Motor neuron (in vitro differentiated cells): ENCODE measurements at regions of chr6 and their contacts with region 1.

Region 1: DNA sequence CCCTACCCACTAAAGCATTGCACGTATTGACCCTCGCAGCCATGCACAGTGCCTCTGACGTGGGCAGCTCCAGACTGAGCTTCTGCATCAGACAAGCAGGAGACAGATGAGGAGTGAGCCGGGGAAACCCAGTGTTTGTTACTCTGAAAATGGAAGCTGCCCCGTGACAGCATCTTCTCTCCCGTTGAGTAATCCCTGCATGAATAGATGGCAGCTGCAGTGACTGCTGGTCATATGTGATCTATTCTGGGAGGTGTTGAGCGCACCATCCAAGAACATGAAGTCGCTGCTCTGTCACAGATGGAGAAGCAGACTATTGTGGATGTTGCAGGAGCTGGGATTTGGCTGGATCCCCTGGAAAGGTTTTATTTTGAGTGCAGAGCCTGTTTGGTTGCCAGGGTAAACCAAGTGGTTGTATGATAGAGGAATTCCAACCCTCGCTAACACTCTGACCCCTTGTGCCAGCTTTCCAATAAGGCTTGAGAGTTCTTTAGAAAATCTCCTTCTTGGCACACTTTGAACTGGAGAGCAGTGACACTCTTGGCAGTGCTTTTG is 242.2 kb downstream of the NRN1 start:
- ATAC-seq: peak; percentile 31 to 95 (median 85)
- H3K4me3 ChIP-seq: no peak overlapping the region
- H3K27ac ChIP-seq: no peak overlapping the region
- H3K4me1 ChIP-seq: no peaks in the 10 kb centered on the region

Region 2: GRCh38 chr6:5471044-5471443 is 293.4 kb before region 1 on chr6:
- in situ Hi-C with region 1: loop called in 1 of 9 experiments (anchors 25 kb)
- ATAC-seq: peak; percentile 58 to 93 (median 68)
- H3K4me3 ChIP-seq: peak overlapping the region in 1 of 5 donors; percentile 15
- H3K27ac ChIP-seq: peak overlapping the region in 1 of 2 donors; percentile 60
- H3K4me1 ChIP-seq: peaks cover 28 to 30% of the 10 kb centered on the region in 2 donors